PC-3 (cell line): ENCODE measurements at regions of chr4 and their contacts with region 1.

Region 1: DNA sequence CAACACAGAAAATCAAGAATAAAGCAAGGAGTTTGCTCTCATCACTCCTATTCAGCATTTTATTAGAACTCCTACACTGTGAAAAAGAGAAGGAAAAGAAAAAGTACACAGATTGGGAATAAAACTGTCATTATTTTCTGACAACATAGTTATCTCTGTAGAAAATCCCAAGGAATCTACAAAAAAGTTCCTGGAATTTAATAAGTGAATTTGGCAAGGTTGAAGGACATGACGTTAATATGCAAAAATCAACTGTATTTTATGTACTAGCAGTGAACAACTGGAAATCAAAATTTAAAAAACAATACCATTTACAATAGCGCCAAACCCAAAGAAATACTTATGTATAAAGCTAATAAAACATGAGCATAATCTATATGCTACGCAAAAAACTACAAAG is 26.3 kb downstream of the CHIC2 start:
- DNase-seq: no peak
- ATAC-seq: no peak
- H3K4me3 ChIP-seq: no peak overlapping the region
- H3K27ac ChIP-seq: no peak overlapping the region
- H3K4me1 ChIP-seq: peaks cover 8% of the 10 kb centered on the region
- H3K27me3 ChIP-seq: no peaks in the 10 kb centered on the region
- CTCF ChIP-seq: no peak

Region 2: DNA sequence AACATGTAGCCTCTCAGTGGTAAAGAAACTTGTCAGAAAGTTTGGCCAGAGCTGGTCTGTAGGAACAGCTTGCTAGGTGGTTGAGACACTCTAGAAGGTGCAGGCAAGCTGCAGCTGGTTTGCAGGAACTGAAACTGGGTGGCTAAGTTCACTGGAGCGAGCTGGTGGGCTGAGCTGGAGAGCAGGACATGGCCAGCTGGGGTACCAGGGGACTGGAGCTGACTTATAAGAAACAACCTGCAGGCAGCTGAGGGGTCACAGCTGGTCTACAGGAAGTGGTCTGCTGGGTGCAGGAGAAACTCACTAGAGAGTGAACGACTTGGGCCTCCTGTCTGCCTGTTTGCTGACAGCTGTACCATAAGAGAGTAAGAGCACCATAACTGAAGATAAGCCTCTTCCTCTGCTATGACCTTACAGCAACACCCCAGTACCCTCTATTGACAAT is 289.7 kb before region 1 on chr4:
- CTCF ChIA-PET with region 1: no interaction called
- POLR2A ChIA-PET with region 1: no interaction called
- intact Hi-C with region 1: no loop called
- DNase-seq: no peak
- ATAC-seq: no peak
- H3K4me3 ChIP-seq: no peak overlapping the region
- H3K27ac ChIP-seq: no peak overlapping the region
- H3K4me1 ChIP-seq: no peaks in the 10 kb centered on the region
- H3K27me3 ChIP-seq: no peaks in the 10 kb centered on the region
- CTCF ChIP-seq: no peak

Region 3: DNA sequence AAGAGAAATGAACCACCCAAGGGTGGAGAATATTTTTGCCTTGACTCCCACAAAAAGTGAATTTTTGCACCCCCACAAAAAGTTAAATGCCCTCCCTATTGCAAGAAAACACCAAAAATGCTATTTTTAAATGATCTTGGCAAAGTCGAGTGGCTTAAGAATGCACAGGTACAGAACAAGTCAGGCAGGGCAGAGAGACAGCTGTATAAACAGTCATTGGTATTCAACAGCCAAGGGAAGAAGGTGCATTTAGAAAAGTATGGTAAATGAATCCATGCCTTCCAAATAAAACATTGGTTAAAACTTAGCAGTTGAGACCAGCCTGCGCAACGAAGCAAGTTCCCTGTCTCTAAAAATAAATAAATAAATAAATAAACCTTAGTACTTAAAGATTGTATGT is 142.9 kb before region 1 on chr4:
- CTCF ChIA-PET with region 1: no interaction called
- POLR2A ChIA-PET with region 1: no interaction called
- intact Hi-C with region 1: no loop called
- DNase-seq: no peak
- ATAC-seq: no peak
- H3K4me3 ChIP-seq: no peak overlapping the region
- H3K27ac ChIP-seq: no peak overlapping the region
- H3K4me1 ChIP-seq: no peaks in the 10 kb centered on the region
- H3K27me3 ChIP-seq: no peaks in the 10 kb centered on the region
- CTCF ChIP-seq: no peak

Region 4: DNA sequence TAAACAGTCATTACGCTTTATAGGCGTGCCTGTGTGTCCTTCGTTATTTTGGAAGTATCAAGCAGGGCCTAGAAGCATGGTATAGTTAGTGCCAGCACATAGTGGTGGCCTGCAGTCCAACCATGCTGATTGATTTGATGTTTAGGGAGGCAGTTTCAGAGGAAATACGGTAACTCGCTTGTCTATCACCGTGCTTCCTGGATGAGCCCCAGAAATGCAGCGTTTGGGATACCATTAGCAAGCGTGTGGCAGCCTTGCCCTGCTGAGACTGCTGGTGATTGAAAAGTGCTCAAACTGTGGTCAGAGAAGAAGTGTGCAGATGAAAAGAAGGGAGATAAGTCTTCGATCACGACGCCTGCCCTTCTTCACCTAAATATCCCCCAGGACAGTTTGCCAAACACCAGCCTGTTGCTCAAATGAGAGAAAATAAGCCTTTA is 132.1 kb before region 1 on chr4:
- CTCF ChIA-PET with region 1: no interaction called
- POLR2A ChIA-PET with region 1: no interaction called
- intact Hi-C with region 1: no loop called
- DNase-seq: peak; percentile 64
- ATAC-seq: peak; percentile 61
- H3K4me3 ChIP-seq: peak overlapping the region; percentile 53
- H3K27ac ChIP-seq: no peak overlapping the region
- H3K4me1 ChIP-seq: peaks cover 19% of the 10 kb centered on the region
- H3K27me3 ChIP-seq: no peaks in the 10 kb centered on the region
- CTCF ChIP-seq: no peak

Region 5: DNA sequence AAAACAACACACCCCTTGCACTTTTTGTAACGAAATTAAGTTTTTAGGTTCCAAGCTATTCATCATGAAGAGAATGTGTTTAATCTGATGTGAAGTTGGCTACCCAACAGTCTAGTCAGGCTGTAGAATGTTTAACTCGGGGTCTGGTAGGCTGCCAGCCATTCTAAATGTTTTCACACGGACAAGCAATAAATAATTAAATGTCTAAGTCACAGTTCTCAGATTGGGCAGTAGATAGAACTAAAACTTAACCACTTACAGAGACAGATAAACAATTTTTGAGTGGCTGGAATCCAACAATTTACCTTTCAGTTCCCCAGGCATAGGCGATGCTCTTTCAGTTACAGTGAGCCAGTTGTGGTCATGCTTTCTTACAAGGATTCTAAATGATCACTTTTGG is 40.2 kb before region 1 on chr4:
- CTCF ChIA-PET with region 1: no interaction called
- POLR2A ChIA-PET with region 1: no interaction called
- intact Hi-C with region 1: no loop called
- DNase-seq: no peak
- ATAC-seq: no peak
- H3K4me3 ChIP-seq: no peak overlapping the region
- H3K27ac ChIP-seq: no peak overlapping the region
- H3K4me1 ChIP-seq: no peaks in the 10 kb centered on the region
- H3K27me3 ChIP-seq: no peaks in the 10 kb centered on the region
- CTCF ChIP-seq: no peak

Region 6: GRCh38 chr4:54091637-54092404 is 53.8 kb after region 1 on chr4:
- CTCF ChIA-PET with region 1: no interaction called
- POLR2A ChIA-PET with region 1: interaction called, 10 read pairs
- intact Hi-C with region 1: no loop called
- DNase-seq: peak; percentile 73
- ATAC-seq: peak; percentile 85
- H3K4me3 ChIP-seq: peak overlapping the region; percentile 76
- H3K27ac ChIP-seq: no peak overlapping the region
- H3K4me1 ChIP-seq: peaks cover 10% of the 10 kb centered on the region; the same call in 1 of the 2 replicates
- H3K27me3 ChIP-seq: 0 out of 2 replicates have a peak, but pooled peaks cover 1% of the 10 kb centered on the region
- CTCF ChIP-seq: no peak